GM10248 (cell line): ENCODE measurements at regions of chr6 and their contacts with region 1.

Region 1: DNA sequence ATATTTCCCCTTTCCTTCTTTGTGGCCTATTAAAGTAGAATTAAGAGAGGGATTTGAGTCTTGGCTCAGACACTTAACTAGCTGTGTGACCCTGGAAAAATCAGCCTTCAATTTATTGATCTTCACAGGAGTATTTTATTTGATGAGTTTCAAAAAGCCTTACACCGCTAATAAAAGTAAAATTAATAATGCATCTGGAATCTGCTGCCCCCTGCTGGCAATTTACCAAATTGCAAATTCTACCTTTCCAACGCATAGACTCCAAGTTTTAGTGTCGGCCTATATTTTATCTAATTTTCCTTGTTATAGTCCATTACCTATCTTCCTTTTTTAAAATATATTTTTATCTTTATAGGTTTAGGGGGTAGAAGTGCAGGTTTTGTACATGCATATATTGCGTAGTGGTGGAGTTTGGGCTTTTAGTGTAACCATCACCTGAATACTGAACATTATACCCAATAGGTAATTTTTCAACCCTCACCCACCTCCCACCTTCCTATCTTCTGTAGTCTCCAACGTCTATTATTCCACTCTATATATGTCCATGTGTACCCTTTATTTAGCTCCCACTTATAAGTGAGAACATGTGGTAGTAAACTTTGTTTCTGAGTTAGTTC is 46.3 kb downstream of the GOPC start:
- DNase-seq: no peak
- CTCF ChIP-seq: peak; percentile 69

Region 2: DNA sequence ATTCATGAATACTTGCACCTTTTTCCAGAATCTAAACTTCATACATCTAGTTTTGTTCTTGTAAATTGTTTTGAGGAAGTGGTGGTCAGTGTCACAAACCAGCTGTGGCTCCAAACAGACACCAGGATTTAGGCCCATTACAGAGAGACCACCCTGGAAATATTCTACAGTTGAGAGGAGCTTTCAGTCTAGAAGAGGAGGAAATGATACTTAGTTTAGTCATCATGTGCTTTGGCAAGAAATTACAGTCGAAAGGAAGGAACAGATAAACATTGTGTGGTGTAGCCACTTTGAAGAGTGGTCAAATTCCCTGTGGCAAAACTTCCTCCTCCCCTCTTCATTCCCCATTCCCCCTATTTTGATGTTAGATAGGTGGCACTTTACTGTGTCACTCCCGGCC is 57.8 kb before region 1 on chr6:
- CTCF ChIA-PET with region 1: no interaction called
- POLR2A ChIA-PET with region 1: no interaction called
- DNase-seq: no peak
- CTCF ChIP-seq: no peak

Region 3: DNA sequence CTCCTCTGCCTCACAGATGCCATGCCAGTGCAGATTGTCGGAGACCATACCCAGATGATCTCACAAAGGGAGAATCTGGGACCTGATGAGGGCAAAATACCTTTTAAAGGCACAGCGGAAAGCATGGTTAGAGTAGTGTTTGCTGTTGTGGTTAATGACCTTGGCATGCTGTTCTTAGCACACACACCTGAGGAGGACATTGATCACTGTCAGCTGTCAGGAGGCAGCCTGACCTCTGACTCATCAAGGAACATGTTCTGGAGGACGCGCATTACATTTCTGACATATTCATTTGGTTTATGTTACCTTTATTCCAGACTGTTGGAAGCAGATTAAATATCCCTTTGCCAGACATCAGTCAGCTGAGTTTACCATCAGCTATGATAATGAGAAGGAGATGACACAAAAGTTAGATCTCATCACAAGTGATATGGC is 10.8 kb before region 1 on chr6:
- CTCF ChIA-PET with region 1: interaction called, 11 read pairs
- POLR2A ChIA-PET with region 1: no interaction called
- DNase-seq: no peak
- CTCF ChIP-seq: no peak

Region 4: GRCh38 chr6:117568831-117569410 is 12.9 kb after region 1 on chr6:
- CTCF ChIA-PET with region 1: interaction called, 34 read pairs
- POLR2A ChIA-PET with region 1: no interaction called
- DNase-seq: no peak
- CTCF ChIP-seq: no peak